Heart left ventricle (tissue), 16 donors: ENCODE measurements at regions of chr10 and their contacts with region 1.

Region 1: DNA sequence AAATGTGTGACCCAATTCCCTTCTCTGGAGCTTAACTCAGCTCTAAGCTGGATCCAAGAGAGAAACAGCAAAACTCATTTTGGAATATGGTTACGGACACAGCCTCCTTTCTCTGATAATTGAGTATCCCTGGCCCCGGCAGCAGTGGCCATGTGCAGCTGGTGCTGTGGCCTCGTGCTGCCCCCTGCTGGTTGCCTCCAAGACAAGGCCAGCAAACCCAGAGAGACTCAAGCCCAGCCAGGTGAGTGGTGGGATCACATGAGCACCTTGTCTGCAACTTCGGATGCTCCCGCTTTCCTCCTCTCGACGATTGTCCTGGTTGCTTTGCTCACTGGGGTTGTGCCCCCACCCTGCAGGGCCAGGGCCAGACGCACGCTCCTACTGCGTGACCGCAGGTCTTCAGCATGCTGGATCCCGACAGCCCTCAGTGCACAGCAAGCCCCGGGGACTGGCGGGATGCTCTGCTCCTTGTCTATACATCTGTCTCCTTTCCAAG is 19.4 kb downstream of the SFTPD start:
- DNase-seq: peak; percentile 82 to 90 (median 84)
- ATAC-seq: peak; percentile 82 to 92 (median 86)
- H3K4me3 ChIP-seq: no peak overlapping the region
- H3K27ac ChIP-seq: no peak overlapping the region
- H3K4me1 ChIP-seq: peaks cover 0 to 32% (median 8%) of the 10 kb centered on the region in 12 donors
- H3K27me3 ChIP-seq: peaks cover 0 to 4% (median 0%) of the 10 kb centered on the region in 9 donors
- CTCF ChIP-seq: peak; percentile 85 to 98 (median 92)
- POLR2A ChIP-seq: no peak

Region 2: DNA sequence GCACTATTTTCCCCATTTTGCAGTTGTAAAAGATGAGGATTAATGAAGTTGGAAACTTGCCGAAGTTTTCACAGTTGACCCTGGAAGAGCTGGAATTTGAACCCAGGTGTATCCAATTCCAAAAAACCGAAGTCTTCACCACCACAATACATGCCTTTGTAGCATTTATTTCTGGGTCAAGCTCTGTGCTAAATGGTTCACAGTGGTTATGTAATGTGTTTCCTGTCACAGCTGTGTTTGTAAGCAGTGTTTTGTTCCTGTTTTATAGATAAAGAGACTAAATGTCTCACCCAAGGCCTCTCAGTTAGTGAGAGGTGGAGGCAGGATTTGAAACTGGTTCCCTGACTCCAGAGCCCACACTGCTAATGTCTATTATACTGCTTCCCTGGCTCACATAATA is 386.8 kb before region 1 on chr10:
- intact Hi-C with region 1: loop called in 1 of 10 experiments (anchors 2 kb)
- DNase-seq: no peak
- ATAC-seq: no peak
- H3K4me3 ChIP-seq: no peak overlapping the region
- H3K27ac ChIP-seq: no peak overlapping the region
- H3K4me1 ChIP-seq: peaks cover 0 to 9% (median 0%) of the 10 kb centered on the region in 12 donors
- H3K27me3 ChIP-seq: no peaks in the 10 kb centered on the region
- CTCF ChIP-seq: no peak
- POLR2A ChIP-seq: no peak